ENCODE measurements at regions of chr15 and their contacts with region 1.

Region 1: GRCh38 chr15:89171136-89172072 is 50.0 kb downstream of the RLBP1 start:
- DNase-seq: no peak
- H3K4me3 ChIP-seq: no peak overlapping the region
- H3K27ac ChIP-seq: no peak overlapping the region
- H3K27me3 ChIP-seq: no peaks in the 10 kb centered on the region
- CTCF ChIP-seq: peak; percentile 72

Region 2: GRCh38 chr15:89114997-89115396 is 56.4 kb before region 1 on chr15:
- CTCF ChIA-PET with region 1: interaction called, 13 read pairs
- POLR2A ChIA-PET with region 1: no interaction called
- DNase-seq: peak; percentile 38
- H3K4me3 ChIP-seq: no peak overlapping the region
- H3K27ac ChIP-seq: no peak overlapping the region
- H3K27me3 ChIP-seq: no peaks in the 10 kb centered on the region
- CTCF ChIP-seq: no peak

Region 3: DNA sequence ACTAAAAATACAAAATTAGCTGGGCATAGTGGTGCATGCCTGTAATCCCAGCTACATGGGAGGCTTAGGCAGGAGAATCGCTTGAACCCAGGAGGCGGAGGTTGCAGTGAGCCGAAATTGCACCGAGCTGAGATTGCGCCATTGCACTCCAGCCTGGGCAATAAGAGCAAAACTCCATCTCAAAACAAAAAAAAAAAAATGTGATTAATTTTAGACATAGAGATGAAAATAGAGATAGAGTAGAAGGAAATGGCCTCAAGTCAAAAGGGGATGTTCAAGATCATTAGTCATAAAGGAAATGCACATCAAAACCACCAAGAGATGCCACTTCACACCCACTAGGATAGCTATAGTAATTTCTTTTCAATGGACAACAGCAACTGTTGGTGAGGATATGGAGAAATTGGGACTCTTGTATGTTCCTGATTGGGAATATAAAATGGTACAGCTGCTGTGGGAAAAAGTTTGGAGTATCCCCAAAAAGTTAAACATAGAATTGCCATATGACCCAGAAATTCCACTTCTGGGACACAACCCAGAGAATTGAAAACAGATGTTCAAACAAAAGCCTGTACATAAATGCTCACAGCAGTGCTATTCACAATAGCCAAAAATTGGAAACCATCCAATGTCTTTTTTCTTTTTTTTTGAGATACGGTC is 27.8 kb before region 1 on chr15:
- CTCF ChIA-PET with region 1: interaction called, 11 read pairs
- POLR2A ChIA-PET with region 1: no interaction called
- DNase-seq: peak; percentile 75
- H3K4me3 ChIP-seq: no peak overlapping the region
- H3K27ac ChIP-seq: peak overlapping the region; percentile 11
- H3K27me3 ChIP-seq: no peaks in the 10 kb centered on the region
- CTCF ChIP-seq: no peak